MCF 10A (cell line): ENCODE measurements at regions of chr1 and their contacts with region 1.

Region 1: GRCh38 chr1:28505406-28506187 is at the start of gene RCC1:
- DNase-seq: peak; percentile 99
- H3K4me3 Mint-ChIP-seq: peak within 1 kb of the TSS; percentile 95
- H3K27ac Mint-ChIP-seq: peak within 1 kb of the TSS; percentile 98
- H3K4me1 Mint-ChIP-seq: peaks cover 22% of the 10 kb centered on the region
- H3K27me3 Mint-ChIP-seq: no peaks in the 10 kb centered on the region
- CTCF ChIP-seq: no peak
- total RNA-seq, gene RCC1: 30.3 and 42.4 TPM in 2 replicates

Region 2: DNA sequence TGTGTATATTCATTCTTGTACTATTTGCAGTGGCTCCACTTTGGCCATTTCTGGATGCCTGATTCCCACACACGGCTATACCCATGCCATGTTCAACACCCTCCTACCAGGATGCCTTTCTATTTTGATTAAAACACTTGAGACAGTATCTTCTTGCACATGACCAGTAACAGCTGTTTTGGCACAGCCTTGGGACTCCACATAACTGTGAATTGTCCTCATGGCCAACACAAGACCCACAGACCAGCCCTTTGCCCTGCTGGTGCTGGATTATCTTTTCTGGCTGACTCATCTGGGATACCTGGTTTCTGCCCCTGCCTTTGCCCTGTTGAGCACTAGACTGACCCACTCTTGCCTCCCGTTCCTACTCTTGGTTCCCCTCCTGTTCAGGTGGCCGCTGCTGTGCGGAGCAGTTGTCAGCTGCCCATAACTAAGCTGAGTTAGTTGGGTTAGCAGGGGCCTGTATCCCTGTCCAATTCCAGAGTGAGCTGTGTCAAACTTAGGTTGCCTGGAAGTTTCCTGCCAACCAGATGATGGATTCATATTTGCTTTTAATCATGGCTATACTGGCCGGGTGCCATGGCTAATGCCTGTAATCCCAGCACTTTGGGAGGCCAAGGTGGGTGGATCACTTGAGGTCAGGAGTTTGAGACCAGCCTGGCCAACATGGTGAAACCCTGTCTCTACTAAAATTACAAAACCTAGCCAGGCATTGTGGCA is 406.4 kb before region 1 on chr1:
- CTCF ChIA-PET with region 1: no interaction called
- POLR2A ChIA-PET with region 1: no interaction called
- intact Hi-C with region 1: no loop called
- DNase-seq: no peak
- H3K4me3 Mint-ChIP-seq: no peak overlapping the region
- H3K27ac Mint-ChIP-seq: no peak overlapping the region
- H3K4me1 Mint-ChIP-seq: no peaks in the 10 kb centered on the region
- H3K27me3 Mint-ChIP-seq: peaks cover 10% of the 10 kb centered on the region
- CTCF ChIP-seq: no peak

Region 3: GRCh38 chr1:28235755-28236655 is 269.6 kb before region 1 on chr1 and contains the start of gene ATP5IF1:
- CTCF ChIA-PET with region 1: no interaction called
- POLR2A ChIA-PET with region 1: interaction called, 14 read pairs
- intact Hi-C with region 1: no loop called
- DNase-seq: peak; percentile 99
- H3K4me3 Mint-ChIP-seq: no peak within 1 kb of the TSS
- H3K27ac Mint-ChIP-seq: no peak within 1 kb of the TSS
- H3K4me1 Mint-ChIP-seq: no peaks in the 10 kb centered on the region
- H3K27me3 Mint-ChIP-seq: no peaks in the 10 kb centered on the region
- CTCF ChIP-seq: no peak
- total RNA-seq, gene ATP5IF1: 214 and 232 TPM in 2 replicates

Region 4: GRCh38 chr1:28417429-28417922 is 88.1 kb before region 1 on chr1:
- CTCF ChIA-PET with region 1: interaction called, 4 read pairs
- POLR2A ChIA-PET with region 1: interaction called, 74 read pairs
- intact Hi-C with region 1: no loop called
- DNase-seq: peak; percentile 94
- H3K4me3 Mint-ChIP-seq: peak overlapping the region; percentile 47
- H3K27ac Mint-ChIP-seq: peak overlapping the region; percentile 89
- H3K4me1 Mint-ChIP-seq: peaks cover 13% of the 10 kb centered on the region
- H3K27me3 Mint-ChIP-seq: no peaks in the 10 kb centered on the region
- CTCF ChIP-seq: no peak

Region 5: GRCh38 chr1:28449904-28450303 is 55.7 kb before region 1 on chr1:
- CTCF ChIA-PET with region 1: interaction called, 3 read pairs
- POLR2A ChIA-PET with region 1: interaction called, 51 read pairs
- intact Hi-C with region 1: no loop called
- DNase-seq: peak; percentile 94
- H3K4me3 Mint-ChIP-seq: peak overlapping the region; percentile 40
- H3K27ac Mint-ChIP-seq: peak overlapping the region; percentile 79
- H3K4me1 Mint-ChIP-seq: peaks cover 13% of the 10 kb centered on the region
- H3K27me3 Mint-ChIP-seq: no peaks in the 10 kb centered on the region
- CTCF ChIP-seq: no peak

Region 6: GRCh38 chr1:28552758-28553663 is 47.4 kb after region 1 on chr1 and contains the start of gene TRNAU1AP:
- CTCF ChIA-PET with region 1: interaction called, 4 read pairs
- POLR2A ChIA-PET with region 1: interaction called, 43 read pairs
- intact Hi-C with region 1: no loop called
- DNase-seq: peak; percentile 95
- H3K4me3 Mint-ChIP-seq: peak within 1 kb of the TSS; percentile 100
- H3K27ac Mint-ChIP-seq: peak within 1 kb of the TSS; percentile 97
- H3K4me1 Mint-ChIP-seq: no peaks in the 10 kb centered on the region
- H3K27me3 Mint-ChIP-seq: no peaks in the 10 kb centered on the region
- CTCF ChIP-seq: no peak
- total RNA-seq, gene TRNAU1AP: 28.2 and 33.4 TPM in 2 replicates